Left lung (tissue), 14 donors: ENCODE measurements at regions of chr17 and their contacts with region 1.

Region 1: DNA sequence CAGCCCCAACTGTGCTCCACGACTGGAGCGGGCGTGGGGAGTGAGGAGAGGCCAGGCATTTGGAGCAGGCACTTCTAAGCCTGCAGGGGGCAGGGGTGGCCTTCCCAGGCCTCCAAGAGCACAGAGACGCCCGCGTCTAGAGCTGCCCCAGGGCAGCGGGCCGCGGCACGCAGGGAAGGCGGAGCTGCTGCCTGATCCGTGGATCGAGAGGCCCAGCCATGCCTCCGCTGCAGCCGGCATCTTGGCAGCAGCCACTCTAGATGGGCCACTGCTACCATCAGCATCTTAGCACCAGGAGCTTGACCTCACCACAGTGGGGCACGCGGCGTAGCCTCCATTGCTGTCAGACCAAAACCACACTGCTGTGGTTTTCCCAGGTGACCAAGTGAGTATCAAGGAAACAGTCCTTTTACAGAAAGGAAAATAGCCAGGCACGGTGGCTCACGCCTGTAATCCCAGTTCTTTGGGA is 20.4 kb upstream of the WDR45B start:
- DNase-seq: peak in 3 of 4 donors; percentile 55 to 88 (median 65)
- ATAC-seq: peak; percentile 93
- H3K4me3 ChIP-seq: no peak overlapping the region
- H3K27ac ChIP-seq: no peak overlapping the region
- H3K4me1 ChIP-seq: peaks cover 0 to 11% of the 10 kb centered on the region in 2 donors
- H3K27me3 ChIP-seq: no peaks in the 10 kb centered on the region
- CTCF ChIP-seq: peak; percentile 39 to 72

Region 2: GRCh38 chr17:82592767-82593589 is 75.7 kb before region 1 on chr17:
- intact Hi-C with region 1: no loop called
- DNase-seq: peak; percentile 71 to 87 (median 79)
- ATAC-seq: peak; percentile 64
- H3K4me3 ChIP-seq: peak overlapping the region; percentile 28 to 58
- H3K27ac ChIP-seq: peak overlapping the region; percentile 91 to 96
- H3K4me1 ChIP-seq: peaks cover 19 to 48% of the 10 kb centered on the region in 2 donors
- H3K27me3 ChIP-seq: no peaks in the 10 kb centered on the region
- CTCF ChIP-seq: no peak

Region 3: GRCh38 chr17:82772026-82772425 is 103.4 kb after region 1 on chr17:
- intact Hi-C with region 1: loop called in 1 of 2 experiments (anchors 5 kb)
- DNase-seq: peak in 1 of 4 donors; percentile 37
- ATAC-seq: peak; percentile 80
- H3K4me3 ChIP-seq: no peak overlapping the region
- H3K27ac ChIP-seq: no peak overlapping the region
- H3K4me1 ChIP-seq: peaks cover 5 to 10% of the 10 kb centered on the region in 2 donors
- H3K27me3 ChIP-seq: no peaks in the 10 kb centered on the region
- CTCF ChIP-seq: no peak